ENCODE measurements at regions of chr6 and their contacts with region 1.

Region 1: GRCh38 chr6:108294727-108295625 is at the start of gene AFG1L:
- DNase-seq: peak; percentile 95
- ATAC-seq: peak; percentile 98 to 99 (median 99)
- H3K4me3 ChIP-seq: peak within 1 kb of the TSS; percentile 89
- H3K27ac ChIP-seq: peak within 1 kb of the TSS; percentile 93
- H3K4me1 ChIP-seq: peaks cover 17% of the 10 kb centered on the region
- H3K27me3 ChIP-seq: no peaks in the 10 kb centered on the region
- CTCF ChIP-seq: no peak
- total RNA-seq, gene AFG1L: 5.4 to 10.4 (median 6.6) TPM

Region 2: DNA sequence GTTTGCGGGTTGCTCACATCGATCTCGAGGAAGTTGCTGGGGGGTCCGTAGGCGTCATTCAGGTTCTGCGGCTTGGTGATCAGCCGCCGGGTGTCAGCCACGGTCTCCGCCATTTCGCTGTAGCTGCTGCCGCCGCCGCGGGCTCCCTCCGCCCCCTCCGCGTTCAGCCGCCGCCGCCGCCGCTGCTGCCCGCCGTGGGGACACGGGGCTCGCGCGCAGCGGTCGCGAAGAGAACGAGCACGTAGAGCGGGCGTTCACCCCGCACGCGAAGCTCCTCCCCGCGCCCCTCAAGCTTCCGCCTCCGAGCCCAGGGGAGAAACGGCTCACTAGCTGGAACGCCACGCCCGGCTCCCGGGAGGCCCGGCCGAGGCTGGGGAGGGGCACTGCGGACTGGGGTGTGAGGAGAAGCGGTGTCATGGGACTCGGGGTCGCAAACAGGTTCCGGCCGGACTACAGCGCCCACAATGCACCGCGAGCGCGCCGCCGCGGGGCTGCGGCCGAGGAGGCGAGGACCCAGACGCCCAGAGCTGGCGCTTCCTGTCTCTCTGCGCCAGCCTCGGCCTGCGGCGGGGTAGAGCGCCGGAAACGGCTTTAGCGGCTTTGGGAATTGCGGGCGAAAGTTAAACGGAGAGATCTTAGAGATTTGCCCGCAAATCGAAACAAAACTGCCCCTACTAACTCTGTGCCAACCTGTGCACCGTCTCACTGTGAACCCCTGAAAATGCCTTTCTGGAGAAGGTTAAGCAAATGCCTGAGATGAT is 34.0 kb before region 1 on chr6 and contains the start of gene SNX3:
- intact Hi-C with region 1: loop called (anchors 2 kb)
- DNase-seq: peak; percentile 97 to 98
- ATAC-seq: peak; percentile 96 to 98 (median 97)
- H3K4me3 ChIP-seq: peak within 1 kb of the TSS; percentile 97
- H3K27ac ChIP-seq: peak within 1 kb of the TSS; percentile 97
- H3K4me1 ChIP-seq: peaks cover 12% of the 10 kb centered on the region
- H3K27me3 ChIP-seq: no peaks in the 10 kb centered on the region
- CTCF ChIP-seq: peak; percentile 16
- total RNA-seq, gene SNX3: 165 to 204 (median 171) TPM

Measured in psoas muscle (tissue), 8 donors.